Psoas muscle (tissue), 8 donors: ENCODE measurements at regions of chr22 and their contacts with region 1.

Region 1: GRCh38 chr22:40044102-40044869 is 49.5 kb downstream of the FAM83F start:
- DNase-seq: peak; percentile 97 to 98
- ATAC-seq: peak; percentile 92 to 94 (median 93)
- H3K4me3 ChIP-seq: peak overlapping the region; percentile 86
- H3K27ac ChIP-seq: peak overlapping the region; percentile 91
- H3K4me1 ChIP-seq: peaks cover 32% of the 10 kb centered on the region
- H3K27me3 ChIP-seq: no peaks in the 10 kb centered on the region
- CTCF ChIP-seq: no peak

Region 2: DNA sequence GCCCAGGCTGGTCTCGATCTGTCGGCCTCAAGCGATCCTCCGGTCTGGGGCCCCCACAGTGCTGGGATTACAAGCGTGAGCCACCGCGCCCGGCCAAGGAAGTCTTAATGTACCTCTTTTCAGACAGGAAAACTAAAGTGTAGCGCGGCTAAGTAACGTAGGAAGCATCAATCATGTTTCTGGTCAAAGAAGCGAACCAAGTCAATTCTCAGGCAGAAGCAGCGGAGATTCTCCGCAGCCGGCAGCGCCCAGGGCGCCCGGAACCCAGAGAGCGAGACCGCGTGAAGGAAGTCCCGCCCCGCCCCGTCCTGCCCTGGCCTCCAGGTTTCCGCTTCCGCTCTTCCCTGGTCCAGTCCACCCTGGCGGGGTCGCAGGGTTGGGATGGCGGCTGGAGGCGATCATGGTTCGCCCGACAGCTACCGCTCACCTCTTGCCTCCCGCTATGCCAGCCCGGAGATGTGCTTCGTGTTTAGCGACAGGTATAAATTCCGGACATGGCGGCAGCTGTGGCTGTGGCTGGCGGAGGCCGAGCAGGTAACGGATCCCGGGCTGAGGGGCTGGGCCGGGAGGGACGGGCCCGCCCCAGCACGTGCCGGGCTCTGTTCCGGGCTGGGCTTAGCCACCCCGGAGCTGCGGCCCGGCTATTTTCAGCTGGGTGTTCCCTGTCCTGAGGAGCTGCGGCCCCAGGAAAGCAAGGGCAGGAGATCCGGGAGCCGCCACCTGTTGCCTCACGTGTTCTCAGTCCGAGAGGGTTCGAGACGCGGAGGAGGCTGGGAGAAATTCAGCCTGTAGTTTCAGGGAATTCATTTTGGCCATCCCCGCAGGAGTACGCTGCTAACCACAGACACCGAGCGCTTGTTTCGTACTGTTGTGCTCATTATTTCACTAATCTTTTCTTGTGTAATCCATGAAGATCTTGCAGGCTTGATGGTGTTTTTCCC is 302.2 kb after region 1 on chr22 and contains the start of gene ADSL:
- intact Hi-C with region 1: loop called in 1 of 2 experiments (anchors 2 kb)
- DNase-seq: peak; percentile 92 to 95
- ATAC-seq: peak; percentile 91 to 94 (median 92)
- H3K4me3 ChIP-seq: peak within 1 kb of the TSS; percentile 92
- H3K27ac ChIP-seq: peak within 1 kb of the TSS; percentile 97
- H3K4me1 ChIP-seq: peaks cover 53% of the 10 kb centered on the region
- H3K27me3 ChIP-seq: no peaks in the 10 kb centered on the region
- CTCF ChIP-seq: no peak
- total RNA-seq, gene ADSL: 114 to 170 (median 141) TPM